HepG2 (cell line): ENCODE measurements at regions of chr12 and their contacts with region 1.

Region 1: DNA sequence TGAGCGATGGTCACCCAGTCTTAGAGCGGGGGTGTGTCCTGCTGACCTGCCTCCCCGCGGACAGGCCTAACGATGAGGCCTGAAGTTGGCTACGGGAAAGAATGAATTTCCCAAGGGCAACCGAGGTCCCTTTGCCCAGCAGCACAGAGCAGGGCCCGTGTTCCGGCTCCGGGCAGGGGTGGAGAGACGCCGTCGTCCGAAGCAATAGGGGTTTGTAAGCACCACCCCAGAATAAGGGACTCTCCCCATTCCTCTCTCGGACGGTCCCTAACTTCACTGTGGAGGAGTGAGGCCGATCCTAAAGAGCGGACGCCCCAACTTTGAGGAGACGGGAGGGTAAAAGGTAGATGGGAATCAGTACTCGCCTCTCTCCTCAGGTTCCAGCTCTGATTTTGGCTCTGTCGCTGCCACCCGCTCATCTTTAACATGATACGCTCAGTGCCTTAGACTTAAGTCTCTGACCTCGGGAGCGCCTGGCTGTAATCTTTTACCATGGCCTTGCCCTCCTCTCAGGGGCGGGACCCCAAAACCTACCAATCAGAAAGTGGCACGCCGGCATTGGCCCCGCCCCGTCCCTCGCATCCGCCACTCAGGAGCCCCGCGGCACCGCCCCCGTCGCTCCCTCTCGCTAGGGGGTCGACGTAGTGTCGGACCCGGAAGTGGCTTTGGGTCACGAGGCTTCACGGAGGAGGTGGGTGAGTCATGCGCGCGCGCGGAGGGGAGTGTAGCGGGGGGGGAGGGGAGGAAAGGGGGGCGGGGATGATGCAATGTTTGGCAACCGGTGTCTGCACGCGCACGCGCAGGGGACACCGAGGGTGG is at the start of gene DDIT3:
- DNase-seq: peak; percentile 97
- ATAC-seq: peak; percentile 71
- H3K4me3 ChIP-seq: peak within 1 kb of the TSS; percentile 93 to 99 (median 97)
- H3K27ac ChIP-seq: peak within 1 kb of the TSS; percentile 97
- H3K4me1 ChIP-seq: peaks cover 48% of the 10 kb centered on the region
- H3K27me3 ChIP-seq: no peaks in the 10 kb centered on the region; a peak in 1 of 5 replicates
- CTCF ChIP-seq: peak; percentile 30; the same call in 1 of the 2 replicates
- EP300 ChIP-seq: peak in 1 of 2 experiments; percentile 38; a peak in 2 of 4 replicates
- POLR2A ChIP-seq: peak; percentile 98 to 100
- RAD21 ChIP-seq: peak; percentile 51; the same call in 1 of the 2 replicates
- total RNA-seq, gene DDIT3: 17.5 and 27.5 TPM in 2 replicates

Region 2: GRCh38 chr12:57229634-57230380 is 290.5 kb before region 1 on chr12 and contains the start of gene SHMT2:
- CTCF ChIA-PET with region 1: no interaction called
- POLR2A ChIA-PET with region 1: interaction called, 10 read pairs
- in situ Hi-C with region 1: no loop called
- intact Hi-C with region 1: no loop called
- DNase-seq: peak; percentile 95
- ATAC-seq: peak; percentile 73
- H3K4me3 ChIP-seq: peak within 1 kb of the TSS; percentile 71 to 82 (median 75)
- H3K27ac ChIP-seq: peak within 1 kb of the TSS; percentile 95
- H3K4me1 ChIP-seq: peaks cover 81% of the 10 kb centered on the region
- H3K27me3 ChIP-seq: peaks cover 0 to 21% of the 10 kb centered on the region in 2 experiments; a peak in 4 of 5 replicates
- CTCF ChIP-seq: no peak; the same call in 1 of the 2 replicates
- EP300 ChIP-seq: no peak
- POLR2A ChIP-seq: peak in 1 of 2 experiments; percentile 68; a peak in 2 of 4 replicates
- RAD21 ChIP-seq: no peak
- total RNA-seq, gene SHMT2: 181 and 184 TPM in 2 replicates

Region 3: GRCh38 chr12:57487597-57488401 is 32.5 kb before region 1 on chr12 and contains the start of gene MARS1:
- CTCF ChIA-PET with region 1: no interaction called
- POLR2A ChIA-PET with region 1: interaction called, 15 read pairs
- in situ Hi-C with region 1: no loop called
- intact Hi-C with region 1: no loop called
- DNase-seq: peak; percentile 96
- ATAC-seq: peak; percentile 96
- H3K4me3 ChIP-seq: peak within 1 kb of the TSS; percentile 95 to 97 (median 96)
- H3K27ac ChIP-seq: peak within 1 kb of the TSS; percentile 62
- H3K4me1 ChIP-seq: peaks cover 23% of the 10 kb centered on the region
- H3K27me3 ChIP-seq: peaks cover 0 to 4% of the 10 kb centered on the region in 2 experiments; a peak in 1 of 5 replicates
- CTCF ChIP-seq: peak; percentile 59
- EP300 ChIP-seq: 0 out of 4 replicates have a peak, but pooled peaks have one; percentile 15 to 16
- POLR2A ChIP-seq: peak; percentile 71 to 80
- RAD21 ChIP-seq: 0 out of 2 replicates have a peak, but pooled peaks have one; percentile 30
- total RNA-seq, gene MARS1: 177 and 181 TPM in 2 replicates

Region 4: GRCh38 chr12:57546438-57547383 is 26.4 kb after region 1 on chr12 and contains the start of gene DCTN2:
- CTCF ChIA-PET with region 1: no interaction called
- POLR2A ChIA-PET with region 1: interaction called, 34 read pairs
- in situ Hi-C with region 1: no loop called
- intact Hi-C with region 1: loop called (anchors 1 kb)
- DNase-seq: peak; percentile 94
- ATAC-seq: peak; percentile 96
- H3K4me3 ChIP-seq: peak within 1 kb of the TSS; percentile 87 to 96 (median 91)
- H3K27ac ChIP-seq: peak within 1 kb of the TSS; percentile 56
- H3K4me1 ChIP-seq: peaks cover 57% of the 10 kb centered on the region
- H3K27me3 ChIP-seq: peaks cover 0 to 27% of the 10 kb centered on the region in 2 experiments; a peak in 2 of 5 replicates
- CTCF ChIP-seq: no peak; the same call in 1 of the 2 replicates
- EP300 ChIP-seq: no peak; a peak in 1 of 4 replicates
- POLR2A ChIP-seq: peak in 1 of 2 experiments; percentile 30; a peak in 1 of 4 replicates
- RAD21 ChIP-seq: peak; percentile 7; the same call in 1 of the 2 replicates
- total RNA-seq, gene DCTN2: 72.0 and 75.5 TPM in 2 replicates

Region 5: DNA sequence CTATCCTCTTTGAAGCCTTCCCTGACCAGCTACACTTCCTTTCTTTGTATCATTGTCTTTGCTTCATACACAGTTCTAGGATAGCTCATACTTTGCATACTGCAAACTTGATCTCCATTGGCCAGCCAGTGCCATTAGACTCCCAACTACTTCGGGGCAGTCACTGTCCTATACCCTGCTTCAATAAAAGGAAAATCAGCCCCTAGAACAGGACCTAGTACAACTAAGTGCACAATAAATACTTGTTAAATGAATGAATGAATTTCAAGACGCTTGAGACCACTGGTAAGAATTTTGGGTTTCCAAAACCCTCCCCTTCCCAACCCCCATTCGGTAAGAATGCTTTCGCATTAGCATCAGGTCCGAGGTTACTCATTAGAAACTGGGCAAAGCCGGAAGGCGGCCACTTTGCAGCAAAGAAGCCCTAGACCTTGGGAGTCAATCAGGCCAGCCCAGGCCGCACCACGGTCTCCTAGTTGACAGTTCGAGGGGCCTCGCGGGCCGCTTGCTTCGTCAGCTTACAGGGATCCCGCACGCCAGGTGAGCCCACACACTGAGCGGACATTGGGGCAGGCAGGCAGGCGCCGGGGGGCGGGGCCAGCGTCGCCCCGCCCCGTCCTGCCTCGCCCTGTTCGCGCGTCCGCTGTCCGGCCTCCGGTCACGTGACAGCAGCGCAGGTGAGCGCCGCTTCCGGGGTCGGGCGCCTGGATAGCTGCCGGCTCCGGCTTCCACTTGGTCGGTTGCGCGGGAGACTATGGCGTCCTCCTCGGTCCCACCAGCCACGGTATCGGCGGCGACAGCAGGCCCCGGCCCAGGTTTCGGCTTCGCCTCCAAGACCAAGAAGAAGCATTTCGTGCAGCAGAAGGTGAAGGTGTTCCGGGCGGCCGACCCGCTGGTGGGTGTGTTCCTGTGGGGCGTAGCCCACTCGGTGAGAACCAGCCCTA is 70.5 kb after region 1 on chr12 and contains the start of gene PIP4K2C:
- CTCF ChIA-PET with region 1: no interaction called
- POLR2A ChIA-PET with region 1: interaction called, 16 read pairs
- in situ Hi-C with region 1: no loop called
- intact Hi-C with region 1: no loop called
- DNase-seq: peak; percentile 77
- ATAC-seq: peak; percentile 93
- H3K4me3 ChIP-seq: peak within 1 kb of the TSS; percentile 70 to 99 (median 92)
- H3K27ac ChIP-seq: peak within 1 kb of the TSS; percentile 63
- H3K4me1 ChIP-seq: peaks cover 22% of the 10 kb centered on the region
- H3K27me3 ChIP-seq: no peaks in the 10 kb centered on the region; a peak in 1 of 5 replicates
- CTCF ChIP-seq: peak; percentile 1; the same call in 1 of the 2 replicates
- EP300 ChIP-seq: 0 out of 4 replicates have a peak, but pooled peaks have one; percentile 11 to 18
- POLR2A ChIP-seq: peak; percentile 58 to 73; a peak in 3 of 4 replicates
- RAD21 ChIP-seq: no peak
- total RNA-seq, gene PIP4K2C: 23.6 and 26.4 TPM in 2 replicates

Region 6: DNA sequence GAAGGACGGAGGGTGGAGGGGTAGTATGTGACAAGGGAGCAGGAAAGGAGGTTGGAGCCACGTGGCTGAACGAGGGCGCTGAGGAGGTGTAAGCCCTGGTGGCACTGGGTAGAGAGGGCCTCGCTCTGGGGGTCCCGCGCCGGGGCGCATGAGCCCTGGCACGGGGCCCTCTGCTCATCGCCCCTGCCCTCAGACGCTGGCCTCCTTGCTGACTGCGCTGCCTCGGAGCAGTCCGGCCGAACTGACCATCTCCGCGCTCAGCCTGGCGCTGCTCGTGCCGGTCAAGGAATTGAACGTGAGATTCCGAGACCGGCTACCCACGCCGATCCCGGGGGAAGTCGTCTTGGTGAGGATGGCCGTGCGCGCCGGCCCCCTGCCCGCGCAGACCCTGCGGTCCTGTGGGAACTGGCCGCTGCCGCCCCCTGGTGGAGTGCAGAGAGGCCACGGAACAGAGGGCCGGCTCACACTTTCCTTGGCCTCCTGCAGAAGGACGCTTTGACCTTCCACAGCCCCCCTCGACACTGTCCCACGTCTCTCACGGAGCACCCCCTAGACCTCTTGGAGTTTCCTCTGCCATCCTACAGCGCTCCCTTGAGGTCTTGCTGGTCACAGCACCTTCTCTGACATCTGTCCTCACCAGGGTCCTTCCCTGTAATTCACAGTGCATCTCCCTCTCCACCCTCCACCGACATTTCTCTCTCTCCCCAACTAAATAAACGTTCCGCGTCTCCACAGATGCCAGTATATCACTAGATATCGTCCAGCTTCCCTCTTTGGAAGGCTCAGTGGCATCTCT is 101.4 kb after region 1 on chr12:
- CTCF ChIA-PET with region 1: no interaction called
- POLR2A ChIA-PET with region 1: interaction called, 19 read pairs
- in situ Hi-C with region 1: no loop called
- intact Hi-C with region 1: loop called (anchors 5 kb)
- DNase-seq: no peak
- ATAC-seq: peak; percentile 80
- H3K4me3 ChIP-seq: peak overlapping the region; percentile 31 to 70 (median 37)
- H3K27ac ChIP-seq: no peak overlapping the region
- H3K4me1 ChIP-seq: peaks cover 47% of the 10 kb centered on the region
- H3K27me3 ChIP-seq: peaks cover 16 to 50% of the 10 kb centered on the region in 2 experiments
- CTCF ChIP-seq: peak; percentile 98
- EP300 ChIP-seq: no peak
- POLR2A ChIP-seq: no peak
- RAD21 ChIP-seq: peak; percentile 92

Region 7: GRCh38 chr12:57918147-57918546 is 397.9 kb after region 1 on chr12:
- CTCF ChIA-PET with region 1: no interaction called
- POLR2A ChIA-PET with region 1: no interaction called
- in situ Hi-C with region 1: no loop called
- intact Hi-C with region 1: no loop called
- DNase-seq: no peak
- ATAC-seq: no peak
- H3K4me3 ChIP-seq: no peak overlapping the region
- H3K27ac ChIP-seq: no peak overlapping the region
- H3K4me1 ChIP-seq: no peaks in the 10 kb centered on the region
- H3K27me3 ChIP-seq: peaks cover 0 to 11% of the 10 kb centered on the region in 2 experiments; a peak in 3 of 5 replicates
- CTCF ChIP-seq: no peak
- EP300 ChIP-seq: no peak
- POLR2A ChIP-seq: no peak
- RAD21 ChIP-seq: no peak